CD4-positive, alpha-beta T cell (primary cell): ENCODE measurements at regions of chr4 and their contacts with region 1.

Region 1: GRCh38 chr4:498328-498904 is 540 bp downstream of the ZNF721 start:
- DNase-seq: peak in 2 of 14 experiments; percentile 39 to 51
- ATAC-seq: peak; percentile 45
- H3K4me3 ChIP-seq: peak overlapping the region; percentile 85
- H3K4me3 Mint-ChIP-seq: peak overlapping the region; percentile 92
- H3K27ac ChIP-seq: peak overlapping the region; percentile 76 to 87
- H3K27ac Mint-ChIP-seq: peak overlapping the region; percentile 91
- H3K4me1 ChIP-seq: peaks cover 28% of the 10 kb centered on the region
- H3K4me1 Mint-ChIP-seq: peaks cover 49% of the 10 kb centered on the region
- H3K27me3 ChIP-seq: no peaks in the 10 kb centered on the region
- H3K27me3 Mint-ChIP-seq: no peaks in the 10 kb centered on the region
- CTCF ChIP-seq: no peak

Region 2: GRCh38 chr4:337143-337931 is 161.1 kb before region 1 on chr4 and contains the start of gene ZNF141:
- CTCF ChIA-PET with region 1: no interaction called
- POLR2A ChIA-PET with region 1: interaction called, 7 read pairs
- intact Hi-C with region 1: loop called (anchors 1 to 5 kb)
- DNase-seq: peak; percentile 81 to 97 (median 87)
- ATAC-seq: peak; percentile 87
- H3K4me3 ChIP-seq: peak within 1 kb of the TSS; percentile 98
- H3K4me3 Mint-ChIP-seq: peak within 1 kb of the TSS; percentile 94
- H3K27ac ChIP-seq: peak within 1 kb of the TSS; percentile 85 to 91
- H3K27ac Mint-ChIP-seq: peak within 1 kb of the TSS; percentile 98
- H3K4me1 ChIP-seq: peaks cover 27% of the 10 kb centered on the region
- H3K4me1 Mint-ChIP-seq: peaks cover 51% of the 10 kb centered on the region
- H3K27me3 ChIP-seq: no peaks in the 10 kb centered on the region
- H3K27me3 Mint-ChIP-seq: no peaks in the 10 kb centered on the region
- CTCF ChIP-seq: no peak
- total RNA-seq, gene ZNF141: 13.6 to 13.7 TPM

Region 3: DNA sequence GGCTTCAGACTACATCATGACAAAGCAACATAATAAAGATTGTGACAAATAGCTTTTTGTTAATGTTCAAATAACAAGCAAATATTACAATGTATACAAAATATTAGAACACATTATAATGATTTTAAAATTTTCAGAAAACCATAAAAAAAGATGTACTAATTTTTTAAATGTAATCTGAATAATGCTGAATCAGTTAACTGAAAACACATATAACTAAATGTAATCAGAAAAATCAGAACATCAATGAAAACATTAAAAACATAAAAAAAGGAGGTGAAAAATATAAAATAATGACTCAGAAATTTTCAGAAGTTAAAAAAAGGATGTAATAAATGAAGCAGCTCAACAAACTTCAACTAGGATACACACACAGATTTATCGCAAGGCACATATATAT is 53.0 kb before region 1 on chr4:
- CTCF ChIA-PET with region 1: no interaction called
- POLR2A ChIA-PET with region 1: no interaction called
- intact Hi-C with region 1: loop called in 1 of 2 experiments (anchors 10 kb)
- DNase-seq: no peak
- ATAC-seq: no peak
- H3K4me3 ChIP-seq: no peak overlapping the region
- H3K4me3 Mint-ChIP-seq: no peak overlapping the region
- H3K27ac ChIP-seq: no peak overlapping the region
- H3K27ac Mint-ChIP-seq: no peak overlapping the region
- H3K4me1 ChIP-seq: no peaks in the 10 kb centered on the region
- H3K4me1 Mint-ChIP-seq: no peaks in the 10 kb centered on the region
- H3K27me3 ChIP-seq: no peaks in the 10 kb centered on the region
- H3K27me3 Mint-ChIP-seq: no peaks in the 10 kb centered on the region
- CTCF ChIP-seq: no peak

Region 4: DNA sequence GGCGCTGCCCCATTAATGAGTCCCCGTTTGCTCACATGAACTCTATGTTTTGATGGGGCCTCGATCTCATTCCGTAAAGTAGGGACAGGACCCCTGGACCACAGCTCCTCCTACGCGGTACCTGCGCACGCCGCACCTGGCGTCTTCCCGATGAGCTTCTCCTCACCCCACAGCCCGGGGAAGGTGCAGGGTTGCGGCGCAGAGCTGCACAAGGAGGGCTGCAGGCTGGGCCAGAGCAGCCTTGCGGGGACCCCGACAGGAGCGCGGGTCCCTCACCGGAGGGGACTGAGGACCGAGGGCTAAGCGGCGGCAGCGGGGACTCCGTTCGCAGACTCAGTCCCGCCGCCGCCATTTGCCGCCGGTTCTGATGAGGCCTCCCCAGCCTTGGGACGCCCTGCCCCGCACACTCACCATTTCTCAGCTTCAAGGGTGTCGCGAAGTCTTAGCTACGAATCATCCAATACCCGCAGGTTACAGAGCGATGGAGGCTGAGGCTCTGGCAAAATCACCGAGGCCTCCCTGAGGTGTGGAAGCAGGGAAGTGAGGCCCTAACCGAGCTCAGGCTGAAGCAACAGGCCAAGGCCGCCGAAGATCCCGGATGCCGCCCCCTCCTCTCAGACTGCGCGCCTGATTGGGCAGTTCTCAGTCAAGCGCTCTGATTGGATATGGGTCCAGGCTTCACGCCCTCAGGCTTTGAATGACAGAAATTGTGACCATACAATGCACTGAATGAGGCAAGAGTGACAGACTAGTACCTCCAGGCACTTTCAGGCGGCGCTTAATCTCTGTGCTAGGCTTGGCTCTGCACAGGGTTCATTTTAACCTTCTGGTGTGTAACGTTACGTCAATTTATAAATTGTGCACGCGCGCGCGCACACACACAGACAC is 24.6 kb before region 1 on chr4:
- CTCF ChIA-PET with region 1: no interaction called
- POLR2A ChIA-PET with region 1: interaction called, 38 read pairs
- intact Hi-C with region 1: loop called (anchors 1 kb)
- DNase-seq: peak; percentile 84 to 99 (median 89)
- ATAC-seq: peak; percentile 97
- H3K4me3 ChIP-seq: peak overlapping the region; percentile 82
- H3K4me3 Mint-ChIP-seq: peak overlapping the region; percentile 98
- H3K27ac ChIP-seq: peak overlapping the region; percentile 81 to 93
- H3K27ac Mint-ChIP-seq: peak overlapping the region; percentile 100
- H3K4me1 ChIP-seq: peaks cover 17% of the 10 kb centered on the region
- H3K4me1 Mint-ChIP-seq: peaks cover 43% of the 10 kb centered on the region
- H3K27me3 ChIP-seq: no peaks in the 10 kb centered on the region
- H3K27me3 Mint-ChIP-seq: no peaks in the 10 kb centered on the region
- CTCF ChIP-seq: no peak

Region 5: GRCh38 chr4:663438-664428 is 165.3 kb after region 1 on chr4:
- CTCF ChIA-PET with region 1: no interaction called
- POLR2A ChIA-PET with region 1: no interaction called
- intact Hi-C with region 1: loop called in 1 of 2 experiments (anchors 5 kb)
- DNase-seq: peak; percentile 60 to 84 (median 76)
- ATAC-seq: peak; percentile 87
- H3K4me3 ChIP-seq: peak overlapping the region; percentile 86
- H3K4me3 Mint-ChIP-seq: peak overlapping the region; percentile 88
- H3K27ac ChIP-seq: peak overlapping the region; percentile 59 to 62
- H3K27ac Mint-ChIP-seq: peak overlapping the region; percentile 80
- H3K4me1 ChIP-seq: peaks cover 22% of the 10 kb centered on the region
- H3K4me1 Mint-ChIP-seq: peaks cover 10% of the 10 kb centered on the region
- H3K27me3 ChIP-seq: no peaks in the 10 kb centered on the region
- H3K27me3 Mint-ChIP-seq: no peaks in the 10 kb centered on the region
- CTCF ChIP-seq: no peak